CD8-positive, alpha-beta T cell (primary cell): ENCODE measurements at regions of chr3 and their contacts with region 1.

Region 1: DNA sequence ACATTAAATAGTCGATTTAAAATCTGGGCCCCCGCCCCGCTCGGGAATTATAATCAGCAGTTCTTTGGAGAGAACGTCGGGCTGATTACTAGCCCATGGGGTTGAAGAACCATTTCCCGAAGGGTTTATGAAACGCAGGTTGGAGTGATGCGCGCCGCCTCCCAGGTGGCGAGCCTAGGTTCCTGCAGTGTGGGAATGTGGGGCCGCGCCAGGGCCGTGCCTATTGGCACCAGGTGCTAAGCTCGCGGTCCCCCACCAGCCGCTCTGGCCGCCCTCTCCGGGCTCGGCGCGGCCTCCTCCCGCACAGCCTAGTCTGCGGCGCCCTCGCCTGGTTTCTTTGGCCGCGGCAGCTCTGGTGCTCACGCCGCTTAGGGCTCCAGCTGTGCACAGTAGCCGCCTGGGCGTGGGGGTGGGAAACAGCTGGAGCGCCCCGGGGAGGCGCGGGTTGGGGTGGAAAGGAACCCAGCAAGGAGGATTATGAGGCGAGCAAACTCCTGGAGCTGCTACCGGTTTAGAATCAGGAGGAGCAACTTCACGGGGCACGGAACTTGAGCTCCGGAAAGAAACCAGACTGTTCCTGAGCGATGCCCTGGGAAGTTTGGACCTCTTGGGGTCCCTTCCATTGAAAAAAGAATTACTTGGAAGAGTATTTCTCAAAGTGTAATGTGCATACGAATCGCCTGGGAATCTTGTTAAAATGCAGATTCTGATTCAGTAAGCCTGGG is 5.6 kb upstream of the MECOM start:
- DNase-seq: peak in 2 of 9 experiments; percentile 30 to 40
- ATAC-seq: no peak
- H3K4me3 ChIP-seq: no peak overlapping the region
- H3K4me3 Mint-ChIP-seq: peak overlapping the region; percentile 42
- H3K27ac ChIP-seq: no peak overlapping the region
- H3K27ac Mint-ChIP-seq: no peak overlapping the region
- H3K4me1 ChIP-seq: peaks cover 19% of the 10 kb centered on the region
- H3K4me1 Mint-ChIP-seq: peaks cover 21% of the 10 kb centered on the region
- H3K27me3 ChIP-seq: peaks cover 30 to 39% of the 10 kb centered on the region in 2 experiments
- H3K27me3 Mint-ChIP-seq: peaks cover 69% of the 10 kb centered on the region
- CTCF ChIP-seq: no peak

Region 2: GRCh38 chr3:168865022-168865551 is 804.0 kb before region 1 on chr3:
- CTCF ChIA-PET with region 1: no interaction called
- POLR2A ChIA-PET with region 1: no interaction called
- intact Hi-C with region 1: loop called in 1 of 2 experiments (anchors 10 kb)
- DNase-seq: peak in 1 of 9 experiments; percentile 1
- ATAC-seq: no peak
- H3K4me3 ChIP-seq: no peak overlapping the region
- H3K4me3 Mint-ChIP-seq: no peak overlapping the region
- H3K27ac ChIP-seq: no peak overlapping the region
- H3K27ac Mint-ChIP-seq: no peak overlapping the region
- H3K4me1 ChIP-seq: no peaks in the 10 kb centered on the region
- H3K4me1 Mint-ChIP-seq: no peaks in the 10 kb centered on the region
- H3K27me3 ChIP-seq: no peaks in the 10 kb centered on the region
- H3K27me3 Mint-ChIP-seq: no peaks in the 10 kb centered on the region
- CTCF ChIP-seq: peak; percentile 45

Region 3: DNA sequence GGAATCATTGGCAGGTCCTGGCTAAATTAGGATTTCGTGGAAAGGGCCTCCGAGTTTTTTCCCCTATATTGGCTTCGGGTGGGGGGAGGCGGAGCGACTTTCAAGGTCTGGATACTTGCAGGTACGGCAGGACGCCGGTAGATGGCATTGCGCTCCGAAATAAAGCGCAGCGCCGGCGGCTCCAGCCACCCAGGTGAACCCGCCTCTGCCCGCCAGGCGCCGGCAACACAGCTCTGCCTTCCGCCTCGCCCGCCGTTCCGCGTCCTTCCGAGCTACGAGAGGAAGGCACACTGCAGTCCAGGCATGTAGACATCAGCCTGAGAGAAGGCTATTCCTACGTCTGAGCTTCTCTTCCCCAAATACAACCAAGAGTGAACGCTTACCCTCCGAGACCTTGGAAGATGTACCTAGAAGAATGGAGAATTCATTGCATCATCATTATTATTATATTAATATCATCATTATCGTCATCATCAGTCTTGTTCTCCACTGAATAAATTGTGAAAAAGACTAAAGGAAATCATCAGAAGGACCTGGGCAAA is 519.7 kb before region 1 on chr3:
- CTCF ChIA-PET with region 1: interaction called, 4 read pairs
- POLR2A ChIA-PET with region 1: no interaction called
- intact Hi-C with region 1: loop called in 1 of 2 experiments (anchors 5 kb)
- DNase-seq: peak; percentile 18 to 70 (median 54)
- ATAC-seq: peak; percentile 95
- H3K4me3 ChIP-seq: no peak overlapping the region
- H3K4me3 Mint-ChIP-seq: peak overlapping the region; percentile 29
- H3K27ac ChIP-seq: no peak overlapping the region
- H3K27ac Mint-ChIP-seq: no peak overlapping the region
- H3K4me1 ChIP-seq: peaks cover 23% of the 10 kb centered on the region
- H3K4me1 Mint-ChIP-seq: peaks cover 25% of the 10 kb centered on the region
- H3K27me3 ChIP-seq: peaks cover 17 to 27% of the 10 kb centered on the region in 2 experiments
- H3K27me3 Mint-ChIP-seq: peaks cover 69% of the 10 kb centered on the region
- CTCF ChIP-seq: peak; percentile 43